Sciatic nerve (tissue), 2 donors: ENCODE measurements at regions of chr6 and their contacts with region 1.

Region 1: DNA sequence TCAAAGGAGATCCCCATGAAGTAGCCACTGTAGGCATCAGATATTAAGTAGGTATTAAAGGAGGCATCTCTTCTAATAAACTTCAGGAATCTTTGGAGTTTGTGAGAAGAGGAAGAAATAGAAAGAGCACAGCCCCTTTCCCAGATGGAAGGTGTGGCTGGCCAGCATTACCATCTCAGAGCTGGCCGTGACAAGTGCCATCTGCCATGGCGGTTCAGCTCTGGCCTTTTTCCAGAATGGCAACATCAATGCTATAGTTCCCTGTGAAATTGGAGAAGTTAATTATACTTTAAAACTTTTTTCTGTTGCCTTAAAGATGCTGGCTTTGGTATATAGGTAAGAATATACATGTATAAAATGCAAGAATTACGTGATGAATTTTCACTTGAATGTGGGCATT is 51.9 kb upstream of the MCUR1 start:
- DNase-seq: no peak
- ATAC-seq: no peak

Region 2: DNA sequence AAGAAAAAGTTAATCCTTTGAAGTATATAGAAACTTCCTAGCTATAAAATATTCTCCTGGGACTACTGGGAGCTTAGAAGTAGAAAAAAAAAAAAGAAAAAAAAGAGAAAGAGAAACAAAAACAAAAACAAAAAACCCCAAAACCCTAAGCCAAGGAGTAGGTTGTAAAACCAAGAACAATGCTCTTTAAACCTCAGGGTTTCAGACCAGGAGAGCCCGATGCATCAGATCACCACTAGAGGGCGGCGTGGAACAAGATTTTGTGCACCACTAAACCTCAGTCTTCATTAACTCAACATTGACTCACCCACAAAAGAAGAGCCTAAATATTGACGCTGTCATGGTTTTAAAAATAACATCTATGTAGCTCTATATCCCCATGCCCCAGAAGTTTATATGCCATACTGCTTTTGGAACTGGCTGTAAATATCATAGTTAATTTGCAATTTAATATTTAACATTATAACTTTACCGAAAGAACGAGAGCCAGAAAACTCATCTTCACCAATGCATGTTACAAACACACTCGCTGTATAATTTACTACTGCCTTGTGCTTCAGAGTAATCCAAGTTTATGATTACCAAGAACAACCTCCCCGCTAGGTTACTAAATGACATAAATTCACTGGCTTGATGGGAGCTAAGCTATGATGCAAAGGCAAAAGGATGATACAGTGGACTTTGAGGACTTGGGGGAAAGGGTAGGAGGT is 71.1 kb before region 1 on chr6:
- intact Hi-C with region 1: loop called (anchors 2 kb)
- DNase-seq: peak; percentile 92
- ATAC-seq: peak; percentile 90